ENCODE measurements at regions of chr12 and their contacts with region 1.

Region 1: DNA sequence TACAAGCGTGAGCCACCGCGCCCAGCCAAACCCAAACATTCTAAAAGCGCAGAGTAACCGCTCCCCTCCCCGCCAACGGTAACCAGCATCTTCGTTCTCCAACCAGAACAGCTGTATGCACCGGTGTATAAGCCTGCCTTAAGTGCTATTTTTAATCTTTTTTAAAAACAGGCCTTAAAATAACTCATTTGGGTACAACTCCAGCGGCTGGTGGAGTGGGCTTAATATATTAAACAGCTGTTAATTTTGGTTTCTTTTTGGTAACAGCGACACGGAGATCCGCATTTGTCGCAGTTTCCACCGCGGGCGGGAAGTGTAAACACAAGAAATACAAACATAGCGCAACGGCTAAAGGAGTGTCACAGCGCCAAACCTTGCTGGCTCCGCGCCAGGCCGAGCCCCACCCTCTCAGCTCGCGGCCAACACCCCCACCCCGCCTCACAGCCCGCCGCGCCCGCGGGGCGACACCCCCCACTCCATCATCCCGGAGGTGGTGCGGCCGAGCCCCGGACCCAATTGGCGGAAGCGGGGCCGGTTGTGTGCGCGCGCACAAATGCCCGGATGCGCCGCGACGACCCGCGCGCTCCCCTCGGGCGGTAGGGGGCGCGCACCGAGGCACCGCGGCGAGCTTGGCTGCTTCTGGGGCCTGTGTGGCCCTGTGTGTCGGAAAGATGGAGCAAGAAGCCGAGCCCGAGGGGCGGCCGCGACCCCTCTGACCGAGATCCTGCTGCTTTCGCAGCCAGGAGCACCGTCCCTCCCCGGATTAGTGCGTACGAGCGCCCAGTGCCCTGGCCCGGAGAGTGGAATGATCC is at the start of gene MDM2:
- DNase-seq: peak; percentile 98
- H3K4me3 ChIP-seq: peak within 1 kb of the TSS; percentile 99
- H3K27ac ChIP-seq: peak within 1 kb of the TSS; percentile 100
- H3K4me1 ChIP-seq: peaks cover 70% of the 10 kb centered on the region
- CTCF ChIP-seq: peak; percentile 78
- total RNA-seq, gene MDM2: 143 and 229 TPM in 2 replicates

Region 2: DNA sequence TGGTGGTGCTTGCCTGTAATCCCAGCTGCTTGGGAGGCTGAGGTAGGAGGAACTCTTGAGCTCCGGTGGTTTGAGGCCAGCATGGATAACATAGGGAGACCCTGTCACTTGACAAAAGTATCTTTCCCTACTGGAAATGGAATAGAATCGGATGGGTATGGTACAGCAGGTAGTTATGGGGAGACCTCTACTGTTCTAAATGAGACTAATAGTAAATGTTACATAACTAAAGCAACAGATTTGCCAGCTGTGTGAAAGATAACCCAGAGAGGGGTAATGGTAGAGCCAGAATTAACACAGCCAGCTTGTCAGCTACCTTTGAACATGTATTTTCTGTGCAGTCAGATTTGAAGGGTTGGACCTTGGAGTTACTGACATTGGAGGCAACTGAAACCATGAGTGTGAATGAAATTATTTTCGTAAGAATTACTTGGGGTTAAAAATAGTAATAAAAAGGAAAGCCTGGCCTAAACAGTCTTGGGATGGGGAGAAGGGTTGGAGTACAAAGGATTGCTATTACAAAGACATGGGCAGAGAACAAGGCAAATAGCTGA is 142.7 kb before region 1 on chr12:
- CTCF ChIA-PET with region 1: no interaction called
- POLR2A ChIA-PET with region 1: no interaction called
- intact Hi-C with region 1: no loop called
- DNase-seq: no peak
- H3K4me3 ChIP-seq: no peak overlapping the region
- H3K27ac ChIP-seq: no peak overlapping the region
- H3K4me1 ChIP-seq: peaks cover 24% of the 10 kb centered on the region
- CTCF ChIP-seq: peak; percentile 40; the same call in 1 of the 2 replicates

Region 3: GRCh38 chr12:68686595-68687521 is 120.9 kb before region 1 on chr12 and contains the start of gene NUP107:
- CTCF ChIA-PET with region 1: no interaction called
- POLR2A ChIA-PET with region 1: no interaction called
- intact Hi-C with region 1: loop called (anchors 5 kb)
- DNase-seq: peak; percentile 99
- H3K4me3 ChIP-seq: peak within 1 kb of the TSS; percentile 98
- H3K27ac ChIP-seq: peak within 1 kb of the TSS; percentile 34
- H3K4me1 ChIP-seq: peaks cover 21% of the 10 kb centered on the region
- CTCF ChIP-seq: no peak
- total RNA-seq, gene NUP107: 106 and 113 TPM in 2 replicates

Region 4: GRCh38 chr12:68772714-68773113 is 35.1 kb before region 1 on chr12:
- CTCF ChIA-PET with region 1: interaction called, 6 read pairs
- POLR2A ChIA-PET with region 1: interaction called, 48 read pairs
- intact Hi-C with region 1: loop called (anchors 1 kb)
- DNase-seq: peak; percentile 96
- H3K4me3 ChIP-seq: peak overlapping the region; percentile 45
- H3K27ac ChIP-seq: peak overlapping the region; percentile 100
- H3K4me1 ChIP-seq: peaks cover 81% of the 10 kb centered on the region
- CTCF ChIP-seq: no peak

Region 5: GRCh38 chr12:68792952-68793835 is 14.6 kb before region 1 on chr12:
- CTCF ChIA-PET with region 1: no interaction called
- POLR2A ChIA-PET with region 1: interaction called, 23 read pairs
- intact Hi-C with region 1: no loop called
- DNase-seq: peak; percentile 87
- H3K4me3 ChIP-seq: no peak overlapping the region
- H3K27ac ChIP-seq: peak overlapping the region; percentile 76
- H3K4me1 ChIP-seq: peaks cover 64% of the 10 kb centered on the region
- CTCF ChIP-seq: peak; percentile 61